Caco-2 (cell line): ENCODE measurements at regions of chr4 and their contacts with region 1.

Region 1: DNA sequence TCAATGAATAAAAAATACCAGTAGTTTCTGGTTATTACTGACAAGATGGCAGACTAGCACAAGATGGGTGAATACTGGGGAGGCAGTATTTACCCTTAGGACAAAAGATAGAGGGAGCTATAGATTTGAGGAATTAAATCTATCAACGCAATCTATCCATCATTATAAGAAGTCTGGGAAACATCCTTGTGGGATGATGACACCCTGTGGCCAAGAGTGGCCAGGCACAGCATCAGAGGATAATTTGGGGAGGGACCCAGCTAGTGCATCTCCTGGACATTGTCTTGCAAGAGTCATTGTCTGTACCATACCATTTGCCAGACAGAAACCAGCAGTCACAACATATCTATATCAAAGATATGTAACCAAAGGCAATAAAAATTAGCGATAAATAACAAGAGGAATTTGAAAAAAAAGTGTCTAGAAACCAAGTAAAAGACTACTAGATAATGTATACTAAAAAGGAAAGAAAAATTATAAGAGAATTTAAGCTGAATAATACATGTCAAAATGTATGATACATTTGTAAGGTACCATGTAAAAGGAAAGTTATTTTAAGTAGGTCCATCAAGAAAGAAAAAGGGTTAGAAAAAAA is 22.9 kb downstream of the KCTD8 start:
- DNase-seq: peak; percentile 25 to 47
- H3K4me3 ChIP-seq: no peak overlapping the region
- H3K4me3 Mint-ChIP-seq: no peak overlapping the region
- H3K27ac Mint-ChIP-seq: no peak overlapping the region
- H3K4me1 ChIP-seq: no peaks in the 10 kb centered on the region
- H3K4me1 Mint-ChIP-seq: no peaks in the 10 kb centered on the region
- H3K27me3 ChIP-seq: no peaks in the 10 kb centered on the region
- H3K27me3 Mint-ChIP-seq: peaks cover 2% of the 10 kb centered on the region
- CTCF ChIP-seq: peak; percentile 42 to 57

Region 2: GRCh38 chr4:42995343-42995944 is 1430.3 kb before region 1 on chr4:
- CTCF ChIA-PET with region 1: no interaction called
- POLR2A ChIA-PET with region 1: no interaction called
- intact Hi-C with region 1: loop called (anchors 2 kb)
- DNase-seq: peak in 1 of 2 experiments; percentile 16
- H3K4me3 ChIP-seq: no peak overlapping the region
- H3K4me3 Mint-ChIP-seq: no peak overlapping the region
- H3K27ac Mint-ChIP-seq: no peak overlapping the region
- H3K4me1 ChIP-seq: no peaks in the 10 kb centered on the region
- H3K4me1 Mint-ChIP-seq: no peaks in the 10 kb centered on the region
- H3K27me3 ChIP-seq: no peaks in the 10 kb centered on the region
- H3K27me3 Mint-ChIP-seq: no peaks in the 10 kb centered on the region
- CTCF ChIP-seq: peak; percentile 56 to 58

Region 3: DNA sequence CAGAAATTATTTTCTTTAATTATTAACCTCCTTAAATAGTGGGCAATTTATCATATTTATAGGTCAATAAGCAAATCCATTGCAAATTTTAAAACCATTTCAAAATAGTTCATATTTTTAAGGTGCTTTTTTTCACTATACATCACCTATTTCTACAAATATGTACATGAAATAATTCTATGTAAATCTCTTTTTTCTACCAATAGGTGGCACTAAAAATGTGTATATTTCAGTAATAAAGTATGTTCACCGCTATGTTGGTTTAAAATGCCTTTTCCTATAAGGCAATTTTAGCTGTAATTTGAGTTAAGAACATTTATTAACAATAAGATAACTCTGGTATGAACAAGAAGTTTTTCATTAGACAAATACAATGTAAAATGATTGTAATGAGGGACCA is 649.3 kb before region 1 on chr4:
- CTCF ChIA-PET with region 1: no interaction called
- POLR2A ChIA-PET with region 1: no interaction called
- intact Hi-C with region 1: loop called (anchors 1 kb)
- DNase-seq: no peak
- H3K4me3 ChIP-seq: no peak overlapping the region
- H3K4me3 Mint-ChIP-seq: no peak overlapping the region
- H3K27ac Mint-ChIP-seq: no peak overlapping the region
- H3K4me1 ChIP-seq: no peaks in the 10 kb centered on the region
- H3K4me1 Mint-ChIP-seq: no peaks in the 10 kb centered on the region
- H3K27me3 ChIP-seq: no peaks in the 10 kb centered on the region
- H3K27me3 Mint-ChIP-seq: no peaks in the 10 kb centered on the region
- CTCF ChIP-seq: peak in 1 of 2 experiments; percentile 28

Region 4: DNA sequence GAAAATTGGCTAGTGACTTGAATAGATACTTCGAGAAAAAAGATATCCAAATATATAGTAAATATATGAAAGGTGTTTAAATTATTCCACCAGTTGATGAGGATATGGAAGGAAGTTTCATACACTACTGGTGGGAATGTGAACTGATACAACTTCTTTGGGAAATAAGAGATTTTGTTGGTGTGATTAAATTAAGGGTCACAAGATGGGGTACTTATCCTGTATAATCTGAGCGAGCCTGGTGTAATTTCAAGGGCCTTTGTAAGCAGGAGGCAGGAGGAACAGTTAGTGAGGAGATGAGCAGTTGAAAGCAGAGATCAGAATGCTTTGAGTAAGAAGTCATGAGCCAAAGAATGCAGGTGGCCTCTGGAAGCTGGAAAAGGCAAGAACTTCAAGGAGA is 169.3 kb before region 1 on chr4:
- CTCF ChIA-PET with region 1: no interaction called
- POLR2A ChIA-PET with region 1: no interaction called
- intact Hi-C with region 1: loop called (anchors 1 kb)
- DNase-seq: no peak
- H3K4me3 ChIP-seq: no peak overlapping the region
- H3K4me3 Mint-ChIP-seq: no peak overlapping the region
- H3K27ac Mint-ChIP-seq: no peak overlapping the region
- H3K4me1 ChIP-seq: no peaks in the 10 kb centered on the region
- H3K4me1 Mint-ChIP-seq: no peaks in the 10 kb centered on the region
- H3K27me3 ChIP-seq: no peaks in the 10 kb centered on the region
- H3K27me3 Mint-ChIP-seq: no peaks in the 10 kb centered on the region
- CTCF ChIP-seq: no peak

Region 5: GRCh38 chr4:44415251-44415650 is 10.5 kb before region 1 on chr4:
- CTCF ChIA-PET with region 1: no interaction called
- POLR2A ChIA-PET with region 1: no interaction called
- intact Hi-C with region 1: no loop called
- DNase-seq: no peak
- H3K4me3 ChIP-seq: no peak overlapping the region
- H3K4me3 Mint-ChIP-seq: no peak overlapping the region
- H3K27ac Mint-ChIP-seq: no peak overlapping the region
- H3K4me1 ChIP-seq: no peaks in the 10 kb centered on the region
- H3K4me1 Mint-ChIP-seq: peaks cover 14% of the 10 kb centered on the region
- H3K27me3 ChIP-seq: no peaks in the 10 kb centered on the region
- H3K27me3 Mint-ChIP-seq: no peaks in the 10 kb centered on the region
- CTCF ChIP-seq: no peak

Region 6: DNA sequence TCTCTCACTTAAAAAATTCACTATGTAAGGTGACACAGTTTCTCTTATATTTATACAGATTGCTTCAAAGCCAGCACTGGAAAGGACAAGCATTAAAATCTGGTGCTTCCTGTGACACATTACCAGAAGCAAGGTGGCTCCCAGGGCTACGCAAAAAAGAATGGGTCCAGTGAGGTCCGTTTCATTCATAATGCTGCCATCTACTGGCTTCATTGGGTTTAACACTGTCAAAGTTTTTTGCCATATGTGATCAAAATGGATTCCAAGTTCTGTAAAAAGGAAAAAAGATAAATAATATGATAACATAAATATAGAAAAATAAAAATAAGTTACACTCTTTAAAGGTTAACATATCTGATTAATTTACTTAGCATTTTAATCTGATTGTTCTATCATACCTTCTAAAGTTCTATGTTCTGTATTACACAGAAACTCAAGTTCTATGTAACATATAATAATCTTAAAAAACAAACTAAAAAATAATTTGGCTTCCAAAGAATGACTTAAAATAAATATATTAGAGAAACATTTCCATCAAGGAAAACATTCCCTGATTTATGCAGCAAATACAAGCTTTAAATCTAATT is 203.7 kb after region 1 on chr4:
- CTCF ChIA-PET with region 1: no interaction called
- POLR2A ChIA-PET with region 1: no interaction called
- intact Hi-C with region 1: loop called (anchors 1 kb)
- DNase-seq: peak; percentile 38 to 49
- H3K4me3 ChIP-seq: no peak overlapping the region
- H3K4me3 Mint-ChIP-seq: no peak overlapping the region
- H3K27ac Mint-ChIP-seq: no peak overlapping the region
- H3K4me1 ChIP-seq: no peaks in the 10 kb centered on the region
- H3K4me1 Mint-ChIP-seq: no peaks in the 10 kb centered on the region
- H3K27me3 ChIP-seq: no peaks in the 10 kb centered on the region; the same call in 1 of the 2 replicates
- H3K27me3 Mint-ChIP-seq: peaks cover 2% of the 10 kb centered on the region
- CTCF ChIP-seq: peak; percentile 55 to 67